OCI-LY7 (cell line): ENCODE measurements at regions of chr1 and their contacts with region 1.

Region 1: DNA sequence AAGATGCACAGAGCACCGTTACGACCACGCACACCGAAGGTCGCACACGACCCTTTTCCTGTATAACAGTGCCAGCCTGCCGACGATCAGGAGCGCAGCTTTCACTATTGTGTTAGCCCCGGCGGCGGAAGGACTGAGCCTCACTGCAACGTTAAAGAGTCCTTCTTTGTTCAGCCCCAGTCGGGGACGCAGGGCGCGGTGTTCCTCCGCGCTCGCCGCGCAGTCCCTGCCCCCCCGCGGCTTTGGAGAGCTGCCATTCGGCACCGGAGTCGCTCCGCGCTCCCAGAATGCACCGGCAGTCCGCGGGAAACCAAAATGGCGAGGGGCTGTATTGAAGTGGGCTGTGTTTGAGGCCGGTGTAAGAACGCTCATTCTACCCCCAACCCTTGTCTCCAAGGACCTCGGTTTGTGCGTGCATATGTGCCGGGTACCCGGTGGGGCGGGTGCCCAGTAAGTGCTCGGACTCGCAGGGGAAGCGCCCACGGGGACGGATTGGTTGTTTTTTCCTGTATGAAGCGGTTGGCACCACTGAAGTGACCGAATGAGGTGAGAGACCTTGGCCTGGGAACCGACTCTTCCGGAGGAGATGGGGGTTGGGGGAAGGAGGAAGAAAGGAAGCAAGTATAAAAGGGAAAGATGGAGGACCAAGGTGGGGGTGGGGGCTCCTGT is at the start of gene MTF2:
- DNase-seq: peak; percentile 99
- H3K4me3 ChIP-seq: peak within 1 kb of the TSS; percentile 84
- H3K27ac ChIP-seq: peak within 1 kb of the TSS; percentile 87
- H3K4me1 ChIP-seq: peaks cover 45% of the 10 kb centered on the region
- CTCF ChIP-seq: no peak
- total RNA-seq, gene MTF2: 48.1 and 51.7 TPM in 2 replicates

Region 2: GRCh38 chr1:92502247-92502646 is 576.9 kb before region 1 on chr1:
- CTCF ChIA-PET with region 1: no interaction called
- POLR2A ChIA-PET with region 1: interaction called, 13 read pairs
- intact Hi-C with region 1: no loop called
- DNase-seq: no peak
- H3K4me3 ChIP-seq: no peak overlapping the region
- H3K27ac ChIP-seq: no peak overlapping the region
- H3K4me1 ChIP-seq: peaks cover 12% of the 10 kb centered on the region
- CTCF ChIP-seq: no peak

Region 3: GRCh38 chr1:92831762-92832536 is 247.2 kb before region 1 on chr1 and contains the start of gene RPL5:
- CTCF ChIA-PET with region 1: no interaction called
- POLR2A ChIA-PET with region 1: interaction called, 4 read pairs
- intact Hi-C with region 1: loop called (anchors 5 kb)
- DNase-seq: peak; percentile 98
- H3K4me3 ChIP-seq: peak within 1 kb of the TSS; percentile 89
- H3K27ac ChIP-seq: peak within 1 kb of the TSS; percentile 59
- H3K4me1 ChIP-seq: peaks cover 41% of the 10 kb centered on the region
- CTCF ChIP-seq: peak; percentile 85
- total RNA-seq, gene RPL5: 1,862 and 2,614 TPM in 2 replicates

Region 4: DNA sequence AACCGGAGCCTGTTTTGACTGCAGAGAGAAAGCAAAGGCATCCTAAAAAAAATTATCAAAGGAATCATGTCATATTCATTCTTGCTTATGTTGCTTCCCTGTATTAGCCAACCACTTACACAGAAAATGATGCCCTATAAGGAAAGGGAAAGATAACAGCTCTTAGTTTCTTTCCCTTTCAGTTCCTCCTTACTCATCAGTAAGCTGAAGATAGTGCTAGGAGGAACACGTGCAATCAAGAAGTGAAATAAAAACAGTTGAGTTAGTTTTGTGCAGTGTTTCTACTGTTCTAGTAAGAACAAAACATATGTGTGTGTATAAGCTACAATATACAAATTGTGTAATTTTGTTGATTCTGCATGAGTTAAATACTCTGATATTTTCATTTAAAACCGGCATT is 45.3 kb before region 1 on chr1:
- CTCF ChIA-PET with region 1: interaction called, 3 read pairs
- POLR2A ChIA-PET with region 1: interaction called, 8 read pairs
- intact Hi-C with region 1: loop called (anchors 2 kb)
- DNase-seq: peak; percentile 77
- H3K4me3 ChIP-seq: peak overlapping the region; percentile 59
- H3K27ac ChIP-seq: peak overlapping the region; percentile 97
- H3K4me1 ChIP-seq: peaks cover 94% of the 10 kb centered on the region
- CTCF ChIP-seq: no peak

Region 5: DNA sequence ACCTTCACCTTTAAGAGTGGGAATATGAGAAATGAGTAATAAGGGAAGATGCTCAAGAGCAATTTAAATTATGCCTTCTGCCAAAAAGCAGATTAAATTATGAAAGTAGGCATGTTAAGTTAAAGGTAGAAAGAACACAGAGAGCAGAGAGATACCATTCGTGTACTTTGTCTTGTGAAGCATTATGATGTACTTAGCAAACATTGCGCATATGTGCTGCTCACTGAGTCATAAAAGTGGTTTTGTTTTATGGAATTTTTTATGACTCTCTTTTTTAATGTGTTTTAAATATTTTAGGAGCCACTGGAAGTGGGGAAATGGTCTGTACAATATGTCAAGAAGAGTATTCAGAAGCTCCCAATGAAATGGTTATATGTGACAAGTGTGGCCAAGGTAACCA is 35.3 kb after region 1 on chr1:
- CTCF ChIA-PET with region 1: interaction called, 3 read pairs
- POLR2A ChIA-PET with region 1: interaction called, 13 read pairs
- intact Hi-C with region 1: no loop called
- DNase-seq: no peak
- H3K4me3 ChIP-seq: no peak overlapping the region
- H3K27ac ChIP-seq: no peak overlapping the region
- H3K4me1 ChIP-seq: peaks cover 26% of the 10 kb centered on the region
- CTCF ChIP-seq: no peak

Region 6: DNA sequence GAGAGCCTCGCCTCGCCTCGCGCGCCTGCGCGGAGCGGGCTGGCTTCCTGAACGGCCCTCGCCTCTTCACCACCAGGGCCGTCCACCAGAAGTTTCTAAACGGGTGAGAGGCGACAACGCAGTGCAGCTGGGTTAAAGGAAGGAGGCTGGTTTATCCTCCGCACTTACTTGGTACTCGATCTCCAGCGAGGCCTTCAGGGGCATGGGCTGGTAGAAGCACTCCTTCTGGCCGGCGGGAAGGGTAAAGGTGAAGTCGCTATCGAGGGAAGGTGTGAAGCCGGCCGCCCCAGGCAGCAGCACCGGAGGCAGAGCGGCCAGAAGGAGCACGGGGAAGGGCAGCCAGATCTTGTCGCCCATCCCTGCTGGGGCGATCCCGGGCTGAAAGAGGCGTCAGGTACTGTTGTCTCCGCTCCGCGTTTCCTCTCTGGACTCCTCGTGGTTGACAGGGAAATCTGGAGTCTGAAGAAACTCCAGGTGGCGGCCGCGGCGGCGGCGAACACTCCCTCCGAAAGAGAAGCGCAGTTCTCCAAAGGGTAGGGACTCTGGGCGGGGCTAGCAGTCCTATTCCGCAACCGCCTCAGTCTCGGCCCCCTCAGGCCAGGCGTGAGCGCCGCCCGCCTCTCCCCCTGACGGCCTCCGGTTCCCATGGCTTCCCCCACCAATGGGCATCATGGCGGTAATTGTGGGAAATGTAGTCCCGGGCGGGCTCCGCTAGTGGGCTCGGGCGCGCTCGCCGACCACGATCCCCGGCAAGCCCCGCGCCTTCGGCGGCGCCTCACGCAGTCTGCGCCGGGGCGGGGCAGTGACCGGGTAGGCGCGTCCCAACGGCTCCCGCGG is 101.0 kb after region 1 on chr1 and contains the start of gene TMED5:
- CTCF ChIA-PET with region 1: no interaction called
- POLR2A ChIA-PET with region 1: interaction called, 4 read pairs
- intact Hi-C with region 1: loop called (anchors 10 kb)
- DNase-seq: peak; percentile 98
- H3K4me3 ChIP-seq: peak within 1 kb of the TSS; percentile 79
- H3K27ac ChIP-seq: peak within 1 kb of the TSS; percentile 90
- H3K4me1 ChIP-seq: peaks cover 50% of the 10 kb centered on the region
- CTCF ChIP-seq: no peak
- total RNA-seq, gene TMED5: 40.3 and 43.1 TPM in 2 replicates

Region 7: GRCh38 chr1:93846211-93846991 is 767.3 kb after region 1 on chr1:
- CTCF ChIA-PET with region 1: no interaction called
- POLR2A ChIA-PET with region 1: interaction called, 4 read pairs
- intact Hi-C with region 1: loop called (anchors 1 kb)
- DNase-seq: peak; percentile 92
- H3K4me3 ChIP-seq: peak overlapping the region; percentile 75
- H3K27ac ChIP-seq: peak overlapping the region; percentile 84
- H3K4me1 ChIP-seq: peaks cover 29% of the 10 kb centered on the region
- CTCF ChIP-seq: peak; percentile 59